ENCODE measurements at regions of chr12 and their contacts with region 1.

Region 1: DNA sequence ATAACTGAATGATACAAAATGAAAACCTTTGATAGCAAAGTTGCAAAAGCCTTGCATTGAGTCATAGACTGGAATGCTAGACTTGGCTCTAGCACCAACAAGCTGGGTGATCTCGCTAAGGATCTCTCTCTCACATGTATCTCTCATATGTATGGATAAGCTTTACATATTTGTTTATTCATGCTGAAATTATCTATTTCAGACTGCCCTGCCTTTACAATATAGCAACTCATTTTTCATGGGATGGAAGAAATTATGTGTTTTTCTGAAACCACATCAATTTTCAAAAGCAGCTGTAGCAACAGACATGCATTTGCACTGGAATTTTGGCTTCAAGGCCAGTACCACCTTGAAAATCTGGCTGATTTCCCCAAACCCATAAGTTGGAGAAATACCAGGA is 11.4 kb downstream of the RERG start:
- ATAC-seq: peak in 3 of 8 experiments; percentile 83 to 90 (median 88)
- H3K4me3 ChIP-seq: no peak overlapping the region
- H3K27ac ChIP-seq: no peak overlapping the region
- H3K4me1 ChIP-seq: peaks cover 6 to 9% of the 10 kb centered on the region in 2 donors

Region 2: DNA sequence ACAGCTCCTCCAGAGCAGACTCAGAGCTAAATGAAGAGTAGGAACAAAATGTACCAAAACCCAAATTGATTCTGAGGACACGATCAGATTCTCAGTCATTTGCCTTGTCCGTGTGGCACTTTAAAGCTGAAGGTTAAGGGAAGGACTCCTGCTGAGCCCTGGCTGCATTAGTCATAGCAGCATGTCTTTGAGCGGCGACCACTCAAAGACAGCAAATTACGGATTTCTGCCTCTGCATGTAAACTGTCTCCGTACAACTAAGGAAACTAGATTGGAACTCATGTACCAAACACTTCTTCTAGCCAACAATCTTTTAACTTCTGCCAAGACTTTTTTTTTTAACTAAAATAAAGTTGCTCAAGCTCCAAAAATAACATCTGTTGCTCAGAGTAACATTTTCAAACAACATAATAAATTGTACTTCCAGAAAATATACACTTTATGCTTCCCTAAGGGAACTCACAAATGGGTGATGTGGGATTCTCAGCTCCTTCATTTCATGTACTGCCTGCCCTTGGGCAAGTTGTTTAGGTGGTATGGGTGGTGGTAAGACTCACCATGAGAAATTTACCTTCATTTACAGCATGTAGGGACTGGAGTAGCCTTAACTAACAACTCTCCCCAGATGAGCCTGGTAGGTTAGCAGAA is 44.6 kb before region 1 on chr12:
- in situ Hi-C with region 1: loop called in 1 of 9 experiments (anchors 10 kb)
- ATAC-seq: peak in 3 of 8 experiments; percentile 9 to 59 (median 34)
- H3K4me3 ChIP-seq: no peak overlapping the region
- H3K27ac ChIP-seq: no peak overlapping the region
- H3K4me1 ChIP-seq: peaks cover 0 to 8% of the 10 kb centered on the region in 2 donors

Region 3: GRCh38 chr12:15329891-15330290 is 120.1 kb after region 1 on chr12:
- in situ Hi-C with region 1: no loop called
- ATAC-seq: no peak
- H3K4me3 ChIP-seq: no peak overlapping the region
- H3K27ac ChIP-seq: no peak overlapping the region
- H3K4me1 ChIP-seq: peaks cover 6 to 25% of the 10 kb centered on the region in 2 donors

Region 4: DNA sequence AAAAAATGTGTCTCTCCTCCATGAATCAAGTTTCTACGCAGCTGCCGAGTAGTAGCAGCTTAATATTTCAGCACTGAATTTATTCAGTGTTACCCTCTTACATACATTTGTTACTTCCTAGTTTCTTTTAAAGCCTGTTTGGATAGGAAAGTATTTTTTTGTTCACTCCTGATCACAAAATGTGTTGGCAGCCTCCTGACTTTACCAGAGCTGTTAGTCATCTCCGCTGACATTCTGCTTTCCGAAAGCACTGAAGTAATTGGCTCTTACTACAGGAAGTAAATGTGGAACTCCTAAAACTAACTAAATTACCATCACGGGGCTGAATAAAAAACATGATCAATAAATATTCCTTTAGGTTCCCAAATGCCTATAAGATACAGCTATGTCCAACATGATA is 353.9 kb after region 1 on chr12:
- in situ Hi-C with region 1: no loop called
- ATAC-seq: peak in 2 of 8 experiments; percentile 52 to 83
- H3K4me3 ChIP-seq: no peak overlapping the region
- H3K27ac ChIP-seq: no peak overlapping the region
- H3K4me1 ChIP-seq: no peaks in the 10 kb centered on the region

Measured in motor neuron (in vitro differentiated cells).